ENCODE measurements at regions of chr1 and their contacts with region 1.

Region 1: DNA sequence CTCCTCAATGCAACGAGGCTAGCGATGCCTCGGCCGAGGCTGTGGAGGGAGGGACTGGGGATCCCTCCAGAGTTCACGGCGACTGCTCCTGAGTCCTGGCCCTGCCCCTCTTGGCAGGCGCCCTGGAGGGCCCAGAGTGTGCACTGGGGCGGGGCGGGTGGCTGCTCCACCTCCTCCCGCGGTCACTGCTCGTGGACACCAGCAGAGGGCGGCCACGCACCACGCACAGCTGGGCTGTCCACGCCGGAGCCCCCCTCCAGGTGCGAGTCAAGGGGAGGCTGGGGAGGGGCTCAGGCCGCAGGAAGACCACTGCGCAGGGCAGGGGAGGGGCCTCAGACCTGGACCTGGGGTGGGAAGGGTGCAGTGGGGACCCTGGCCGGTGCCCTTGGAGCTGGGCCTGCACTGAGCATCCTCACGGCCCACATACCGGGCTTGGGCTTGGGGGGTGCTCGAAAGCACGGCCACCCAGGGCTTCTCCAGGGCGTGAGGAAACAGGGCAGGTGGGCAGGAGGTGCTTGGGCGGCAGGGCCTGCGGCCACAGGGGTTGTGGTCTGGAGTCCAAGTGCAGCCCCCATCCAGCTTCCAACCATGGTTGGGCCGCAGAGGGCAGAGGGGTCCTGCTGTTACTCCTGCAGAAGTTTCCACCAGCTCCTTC is 20.6 kb upstream of the TTC34 start:
- DNase-seq: peak; percentile 74
- ATAC-seq: peak; percentile 91
- H3K4me3 Mint-ChIP-seq: no peak overlapping the region
- H3K27ac Mint-ChIP-seq: no peak overlapping the region
- H3K4me1 Mint-ChIP-seq: no peaks in the 10 kb centered on the region
- H3K27me3 Mint-ChIP-seq: peaks cover 3% of the 10 kb centered on the region

Region 2: DNA sequence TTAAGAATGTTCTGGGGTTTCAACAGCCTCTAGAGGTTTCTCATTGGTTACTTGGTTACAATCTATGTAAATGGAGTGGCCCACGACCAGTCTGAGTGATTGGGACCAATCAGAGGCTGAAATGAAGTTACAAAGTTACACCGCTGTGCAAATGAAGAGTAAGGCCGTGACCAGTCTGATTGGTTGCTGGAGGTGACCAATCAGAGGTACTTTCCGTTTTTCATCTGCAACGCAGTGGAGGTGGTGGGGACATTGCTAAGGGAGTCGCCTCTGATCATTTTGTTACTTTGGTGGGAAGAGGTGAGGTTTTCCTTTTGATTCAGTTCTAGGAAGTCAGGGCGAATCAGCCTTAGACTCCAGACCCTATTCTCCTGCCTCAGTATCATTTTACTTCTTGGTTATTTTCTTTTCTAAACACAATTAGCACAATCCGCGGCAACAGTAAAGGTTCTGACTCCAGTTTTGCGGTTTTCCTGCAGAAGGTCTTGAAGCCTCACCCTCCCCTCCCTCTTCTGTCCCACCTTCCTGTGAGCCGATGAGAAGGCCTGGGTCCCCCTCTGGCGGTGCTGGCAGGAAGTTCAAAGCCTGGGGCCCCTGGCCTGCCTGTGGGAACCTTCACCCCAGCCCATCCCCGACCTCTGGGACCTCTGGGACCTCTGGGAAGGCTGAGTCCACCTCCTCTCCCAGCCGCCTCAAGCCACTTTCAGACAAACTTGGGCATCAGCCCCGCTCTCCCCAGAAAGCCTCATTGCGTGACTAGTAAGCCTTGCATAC is 18.1 kb after region 1 on chr1:
- CTCF ChIA-PET with region 1: interaction called, 3 read pairs
- POLR2A ChIA-PET with region 1: no interaction called
- intact Hi-C with region 1: loop called in 1 of 2 experiments (anchors 1 kb)
- DNase-seq: peak; percentile 81
- ATAC-seq: peak; percentile 96
- H3K4me3 Mint-ChIP-seq: peak overlapping the region; percentile 67
- H3K27ac Mint-ChIP-seq: peak overlapping the region; percentile 84
- H3K4me1 Mint-ChIP-seq: peaks cover 21% of the 10 kb centered on the region
- H3K27me3 Mint-ChIP-seq: no peaks in the 10 kb centered on the region

Region 3: GRCh38 chr1:2921970-2922686 is 100.0 kb after region 1 on chr1:
- CTCF ChIA-PET with region 1: interaction called, 3 read pairs
- POLR2A ChIA-PET with region 1: no interaction called
- intact Hi-C with region 1: loop called (anchors 1 to 5 kb)
- DNase-seq: peak; percentile 65
- ATAC-seq: peak; percentile 55
- H3K4me3 Mint-ChIP-seq: no peak overlapping the region
- H3K27ac Mint-ChIP-seq: no peak overlapping the region
- H3K4me1 Mint-ChIP-seq: no peaks in the 10 kb centered on the region
- H3K27me3 Mint-ChIP-seq: peaks cover 2% of the 10 kb centered on the region

Region 4: DNA sequence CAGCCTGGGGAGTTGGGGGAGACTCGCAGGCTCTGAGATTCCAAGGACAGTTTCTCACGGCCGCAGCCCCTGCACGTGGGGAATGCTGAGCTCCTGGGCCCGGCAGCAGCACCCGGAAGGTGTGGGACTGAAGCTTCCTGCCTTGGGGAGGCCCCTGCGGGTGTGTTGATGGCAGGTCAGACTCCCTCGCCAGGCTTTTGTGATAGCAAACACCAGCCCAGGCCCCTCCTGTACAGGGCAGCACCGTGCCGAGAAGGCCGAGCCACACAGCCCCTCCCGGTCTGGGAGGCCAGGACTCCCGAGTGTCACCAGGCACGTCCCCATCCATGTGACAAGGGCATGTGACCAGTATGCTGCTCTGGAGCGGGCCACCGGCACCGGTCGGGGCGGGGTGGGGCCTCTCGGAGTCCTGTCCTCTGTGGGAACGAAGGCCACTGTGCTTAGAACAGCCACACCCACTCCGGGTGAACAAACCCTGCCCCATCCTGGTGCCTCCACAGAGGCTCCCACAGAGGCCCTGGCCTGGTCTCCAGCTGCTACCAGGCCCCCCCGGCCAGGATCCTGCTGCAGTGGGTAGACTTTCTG is 601.2 kb after region 1 on chr1:
- CTCF ChIA-PET with region 1: no interaction called
- POLR2A ChIA-PET with region 1: no interaction called
- intact Hi-C with region 1: loop called (anchors 1 to 5 kb)
- DNase-seq: no peak
- ATAC-seq: no peak
- H3K4me3 Mint-ChIP-seq: no peak overlapping the region
- H3K27ac Mint-ChIP-seq: no peak overlapping the region
- H3K4me1 Mint-ChIP-seq: no peaks in the 10 kb centered on the region
- H3K27me3 Mint-ChIP-seq: peaks cover 3% of the 10 kb centered on the region

Measured in activated CD4-positive, alpha-beta T cell treated with anti-CD3 and anti-CD28 coated beads for 36 hours (primary cell).